Ascending aorta (tissue), 2 donors: ENCODE measurements at regions of chr10 and their contacts with region 1.

Region 1: GRCh38 chr10:102399217-102400089 is 3.9 kb downstream of the NFKB2 start:
- DNase-seq: peak; percentile 49 to 94
- H3K4me3 ChIP-seq: peak overlapping the region; percentile 57 to 75
- H3K27ac ChIP-seq: peak overlapping the region; percentile 84 to 90
- H3K4me1 ChIP-seq: peaks cover 14 to 24% of the 10 kb centered on the region in 2 donors
- H3K27me3 ChIP-seq: no peaks in the 10 kb centered on the region
- CTCF ChIP-seq: peak; percentile 97

Region 2: DNA sequence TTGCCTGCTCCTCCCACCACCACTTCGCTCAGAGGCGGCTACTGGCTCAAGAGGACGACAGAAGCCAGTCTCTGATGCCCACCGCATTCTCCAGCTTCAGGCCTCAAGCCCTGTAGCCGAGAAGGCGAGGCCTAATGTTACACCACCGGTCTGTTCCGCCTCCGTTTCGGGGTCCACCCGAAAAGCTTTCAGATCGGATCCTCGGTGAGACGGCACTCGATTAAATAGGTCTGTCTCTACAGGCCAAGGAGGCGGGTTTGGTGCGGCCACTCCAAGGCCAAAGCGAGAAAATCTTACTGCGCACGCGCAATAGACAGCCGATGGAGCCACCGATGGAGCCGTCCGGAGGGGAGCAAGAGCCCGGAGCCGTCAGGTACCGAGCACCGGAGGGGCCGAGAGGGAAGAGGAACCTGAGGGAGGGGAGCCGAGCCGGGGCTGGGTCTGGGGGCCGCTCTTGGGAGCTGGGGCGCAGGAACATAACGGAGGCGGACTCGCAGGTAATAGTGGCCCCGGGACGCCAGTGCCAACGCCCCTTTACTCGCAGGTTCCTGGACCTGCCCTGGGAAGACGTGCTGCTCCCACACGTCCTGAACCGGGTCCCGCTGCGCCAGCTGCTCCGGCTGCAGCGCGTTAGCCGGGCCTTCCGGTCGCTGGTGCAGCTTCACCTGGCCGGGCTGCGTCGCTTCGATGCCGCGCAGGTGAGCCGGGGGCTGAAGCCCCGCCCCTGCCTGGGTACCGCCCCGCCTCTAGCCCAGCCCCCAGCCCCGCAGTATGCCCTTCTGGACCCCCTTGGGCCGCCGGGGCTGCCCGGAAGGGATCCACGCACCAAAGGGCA is 21.6 kb after region 1 on chr10 and contains the start of gene FBXL15:
- intact Hi-C with region 1: loop called (anchors 1 kb)
- DNase-seq: peak; percentile 85 to 99
- H3K4me3 ChIP-seq: peak within 1 kb of the TSS; percentile 92 to 93
- H3K27ac ChIP-seq: peak within 1 kb of the TSS; percentile 85 to 86
- H3K4me1 ChIP-seq: peaks cover 16 to 27% of the 10 kb centered on the region in 2 donors
- H3K27me3 ChIP-seq: peaks cover 13% of the 10 kb centered on the region
- CTCF ChIP-seq: no peak
- total RNA-seq, gene FBXL15: 16.5 TPM